ENCODE measurements at regions of chr11 and their contacts with region 1.

Region 1: DNA sequence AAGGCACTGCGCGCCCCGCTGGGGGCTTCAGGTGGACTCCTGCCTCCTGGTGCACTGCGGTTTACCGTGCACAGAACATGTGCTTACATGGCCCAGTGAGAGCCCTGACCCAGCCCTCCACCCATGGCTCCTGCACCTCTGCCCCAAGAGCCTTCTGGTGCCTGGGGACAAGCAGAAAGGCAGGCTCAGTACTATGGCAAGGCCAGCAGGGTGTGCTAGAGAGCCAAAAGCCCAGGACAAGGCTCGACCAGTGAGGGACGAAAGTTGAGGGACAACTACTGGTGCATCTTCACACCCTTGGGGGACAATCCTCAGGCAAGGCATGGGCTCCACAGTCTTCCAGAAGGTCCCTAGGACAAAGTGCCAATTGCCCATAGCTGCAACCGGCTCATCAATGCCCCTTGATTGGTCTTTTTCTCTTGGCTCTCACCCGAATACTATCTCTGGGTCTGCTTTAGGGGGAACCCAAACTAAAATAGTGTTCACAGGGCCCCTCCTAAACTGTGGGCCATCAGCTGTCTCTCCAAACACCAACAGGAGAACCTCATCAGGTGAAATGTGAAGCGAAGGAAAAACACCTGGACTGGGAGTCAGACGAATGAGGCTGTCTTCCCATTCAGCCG is 13.5 kb downstream of the PGA5 start:
- DNase-seq: peak; percentile 67
- H3K27ac ChIP-seq: no peak overlapping the region
- CTCF ChIP-seq: peak; percentile 72

Region 2: GRCh38 chr11:61272731-61273130 is 18.2 kb after region 1 on chr11:
- CTCF ChIA-PET with region 1: no interaction called
- POLR2A ChIA-PET with region 1: no interaction called
- DNase-seq: no peak
- H3K27ac ChIP-seq: peak overlapping the region; percentile 68; the same call in 1 of the 2 replicates
- CTCF ChIP-seq: no peak

Region 3: DNA sequence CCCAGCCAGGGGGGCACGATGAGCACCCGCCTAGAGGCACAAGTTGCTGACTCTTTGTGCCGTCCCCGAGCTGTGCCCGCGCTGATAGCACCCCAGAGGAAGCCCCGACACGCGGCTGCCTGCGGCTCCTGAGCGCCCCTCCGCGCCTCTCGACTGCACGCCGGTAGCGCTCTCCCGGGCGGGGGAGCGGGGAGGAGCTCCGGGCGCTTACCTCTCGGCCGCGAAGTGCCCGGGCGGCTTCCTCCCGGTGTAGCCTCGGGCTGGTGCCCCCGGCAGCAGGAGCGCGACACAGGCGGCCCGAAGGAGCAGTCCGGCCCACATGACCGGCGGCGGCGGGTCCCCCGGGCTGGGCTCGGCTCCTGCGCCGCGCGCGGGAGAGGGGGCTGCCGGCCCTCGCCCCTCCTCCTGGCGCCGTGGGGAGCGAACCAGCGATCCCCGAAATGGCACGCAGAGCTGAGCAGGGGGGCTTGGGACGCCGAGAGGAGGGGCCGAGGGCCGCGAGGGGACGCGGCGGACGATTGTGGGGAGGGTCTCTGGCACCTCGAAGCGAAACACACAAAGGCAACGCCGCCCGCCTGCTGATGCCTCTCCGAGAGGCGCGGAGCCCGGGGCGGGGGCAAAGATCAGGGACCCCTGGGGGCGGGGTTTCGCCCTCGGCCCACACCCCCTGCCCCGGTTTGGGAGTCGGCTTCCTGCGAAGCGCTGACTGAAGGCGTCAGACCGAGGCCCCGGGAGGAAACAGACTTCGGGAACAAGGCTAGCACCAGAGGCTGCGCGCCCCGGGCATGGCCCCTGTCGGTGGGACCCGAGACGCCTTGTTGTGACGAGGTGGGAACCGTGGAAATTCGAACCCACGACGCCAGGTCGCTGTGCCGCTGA is 40.4 kb after region 1 on chr11 and contains the start of gene VWCE:
- CTCF ChIA-PET with region 1: interaction called, 15 read pairs
- POLR2A ChIA-PET with region 1: no interaction called
- DNase-seq: peak; percentile 45
- H3K27ac ChIP-seq: peak within 1 kb of the TSS; percentile 73; the same call in 1 of the 2 replicates
- CTCF ChIP-seq: peak; percentile 49

Region 4: GRCh38 chr11:62108017-62108750 is 853.7 kb after region 1 on chr11:
- CTCF ChIA-PET with region 1: no interaction called
- POLR2A ChIA-PET with region 1: no interaction called
- DNase-seq: peak; percentile 59
- H3K27ac ChIP-seq: no peak overlapping the region
- CTCF ChIP-seq: peak; percentile 81

Measured in RWPE1 (cell line).